ENCODE measurements at regions of chr5 and their contacts with region 1.

Region 1: DNA sequence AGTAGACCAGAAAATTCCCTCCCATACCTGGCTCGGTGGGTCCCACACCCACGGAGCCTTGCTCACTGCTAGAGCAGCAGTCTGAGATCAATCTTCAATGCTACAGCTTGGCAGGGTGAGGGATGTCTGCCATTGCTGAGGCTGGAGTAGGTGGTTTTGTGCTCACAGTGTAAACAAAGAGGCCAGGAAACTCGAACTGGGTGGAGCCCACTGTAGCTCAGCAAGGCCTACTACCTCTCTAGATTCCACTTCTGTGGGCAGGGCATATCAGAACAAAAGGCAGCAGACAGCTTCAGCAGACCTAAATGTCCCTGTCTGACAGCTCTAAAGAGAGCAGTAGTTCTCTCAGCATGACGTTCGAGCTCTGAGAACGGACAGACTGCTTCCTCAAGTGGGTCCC is 5.6 kb upstream of the GZMA start:
- DNase-seq: peak; percentile 22 to 87 (median 56)
- ATAC-seq: peak; percentile 84
- H3K4me3 ChIP-seq: no peak overlapping the region
- H3K4me3 Mint-ChIP-seq: peak overlapping the region; percentile 72
- H3K27ac ChIP-seq: peak overlapping the region; percentile 50 to 64
- H3K27ac Mint-ChIP-seq: peak overlapping the region; percentile 90
- H3K4me1 ChIP-seq: peaks cover 48% of the 10 kb centered on the region
- H3K4me1 Mint-ChIP-seq: peaks cover 86% of the 10 kb centered on the region
- H3K27me3 ChIP-seq: no peaks in the 10 kb centered on the region
- H3K27me3 Mint-ChIP-seq: no peaks in the 10 kb centered on the region
- CTCF ChIP-seq: no peak

Region 2: DNA sequence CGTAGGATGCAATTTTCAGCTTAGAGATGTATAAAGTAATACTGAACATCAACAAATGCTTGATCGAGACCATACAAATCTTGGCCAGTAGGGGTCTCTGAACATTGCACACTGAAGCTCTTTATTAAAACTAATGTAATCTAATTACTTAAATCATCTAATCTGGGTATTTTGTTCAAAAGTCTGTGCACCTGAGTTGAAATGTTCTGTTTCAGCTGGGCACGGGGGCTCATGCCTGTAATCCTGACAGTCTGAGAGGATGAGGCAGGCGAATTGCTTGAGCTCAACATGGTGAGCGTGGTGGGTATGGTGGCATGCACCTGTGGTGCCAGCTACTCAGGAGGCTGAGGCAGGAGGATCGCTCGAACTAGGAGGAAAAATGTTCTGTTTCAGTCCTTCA is 152.5 kb before region 1 on chr5:
- CTCF ChIA-PET with region 1: interaction called, 4 read pairs
- POLR2A ChIA-PET with region 1: interaction called, 17 read pairs
- intact Hi-C with region 1: no loop called
- DNase-seq: peak in 11 of 14 experiments; percentile 11 to 77 (median 29)
- ATAC-seq: peak; percentile 58
- H3K4me3 ChIP-seq: no peak overlapping the region
- H3K4me3 Mint-ChIP-seq: no peak overlapping the region
- H3K27ac ChIP-seq: no peak overlapping the region
- H3K27ac Mint-ChIP-seq: no peak overlapping the region
- H3K4me1 ChIP-seq: peaks cover 3% of the 10 kb centered on the region
- H3K4me1 Mint-ChIP-seq: no peaks in the 10 kb centered on the region
- H3K27me3 ChIP-seq: no peaks in the 10 kb centered on the region
- H3K27me3 Mint-ChIP-seq: no peaks in the 10 kb centered on the region
- CTCF ChIP-seq: peak; percentile 89

Region 3: DNA sequence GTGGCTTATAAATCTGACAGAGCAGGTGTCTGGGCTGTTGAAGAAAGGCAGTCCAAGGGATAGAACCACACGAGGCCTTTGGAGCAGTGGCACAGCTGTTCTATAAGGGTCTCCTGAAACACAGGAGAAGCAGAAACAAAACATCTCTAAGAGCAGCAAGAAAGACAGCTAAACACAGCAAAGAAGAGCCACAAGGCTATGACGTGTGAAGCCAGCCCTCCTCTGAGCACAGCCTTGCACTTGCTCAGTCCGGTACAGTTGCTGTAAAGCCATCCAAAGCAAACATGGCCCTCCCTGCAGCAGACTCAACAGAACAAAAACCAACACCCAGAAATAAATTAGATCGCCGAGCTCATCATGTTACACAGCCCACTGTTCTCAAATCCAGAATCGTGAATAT is 75.5 kb before region 1 on chr5:
- CTCF ChIA-PET with region 1: no interaction called
- POLR2A ChIA-PET with region 1: interaction called, 13 read pairs
- intact Hi-C with region 1: no loop called
- DNase-seq: no peak
- ATAC-seq: no peak
- H3K4me3 ChIP-seq: no peak overlapping the region
- H3K4me3 Mint-ChIP-seq: no peak overlapping the region
- H3K27ac ChIP-seq: peak overlapping the region in 1 of 2 donors; percentile 10
- H3K27ac Mint-ChIP-seq: no peak overlapping the region
- H3K4me1 ChIP-seq: peaks cover 21% of the 10 kb centered on the region
- H3K4me1 Mint-ChIP-seq: peaks cover 58% of the 10 kb centered on the region
- H3K27me3 ChIP-seq: no peaks in the 10 kb centered on the region
- H3K27me3 Mint-ChIP-seq: no peaks in the 10 kb centered on the region
- CTCF ChIP-seq: no peak

Region 4: DNA sequence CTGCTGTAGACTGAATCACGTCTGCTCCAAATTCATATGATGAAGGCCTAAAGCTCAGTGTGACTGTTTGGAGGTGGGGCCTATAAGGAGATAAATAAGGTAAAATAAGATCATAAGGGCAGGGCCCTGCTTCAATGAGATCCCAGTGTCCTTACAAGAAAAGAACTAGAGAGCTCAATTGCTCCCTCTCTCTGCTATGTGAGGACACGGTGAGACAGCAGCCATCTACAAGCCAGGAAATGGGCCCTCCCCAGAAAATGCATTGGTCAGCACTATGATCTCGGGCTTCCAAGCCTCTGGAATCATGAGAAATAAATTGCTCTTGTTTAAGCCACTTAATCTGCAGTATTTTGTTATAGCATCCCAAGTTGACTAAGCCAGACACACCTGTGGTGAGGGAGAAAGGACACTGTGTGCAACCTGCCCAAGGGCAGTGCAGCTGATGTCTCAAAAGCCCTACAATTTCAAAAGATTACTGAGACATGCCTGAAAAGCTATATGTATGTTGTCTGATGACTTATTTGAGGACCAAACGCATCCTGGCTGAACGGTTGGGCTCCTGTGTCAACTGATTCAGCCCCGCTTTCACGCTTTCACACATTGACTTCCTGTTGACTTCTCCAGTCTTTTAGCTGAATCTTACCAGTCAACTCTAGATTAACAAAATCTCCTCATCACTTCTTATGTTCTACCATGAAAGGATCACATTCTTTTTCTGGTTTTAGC is 59.7 kb before region 1 on chr5:
- CTCF ChIA-PET with region 1: no interaction called
- POLR2A ChIA-PET with region 1: interaction called, 25 read pairs
- intact Hi-C with region 1: loop called in 1 of 2 experiments (anchors 2 kb)
- DNase-seq: peak in 13 of 14 experiments; percentile 17 to 85 (median 51)
- ATAC-seq: peak; percentile 91
- H3K4me3 ChIP-seq: no peak overlapping the region
- H3K4me3 Mint-ChIP-seq: peak overlapping the region; percentile 40
- H3K27ac ChIP-seq: peak overlapping the region; percentile 55 to 64
- H3K27ac Mint-ChIP-seq: peak overlapping the region; percentile 80
- H3K4me1 ChIP-seq: peaks cover 15% of the 10 kb centered on the region
- H3K4me1 Mint-ChIP-seq: peaks cover 39% of the 10 kb centered on the region
- H3K27me3 ChIP-seq: no peaks in the 10 kb centered on the region
- H3K27me3 Mint-ChIP-seq: no peaks in the 10 kb centered on the region
- CTCF ChIP-seq: peak; percentile 14

Region 5: DNA sequence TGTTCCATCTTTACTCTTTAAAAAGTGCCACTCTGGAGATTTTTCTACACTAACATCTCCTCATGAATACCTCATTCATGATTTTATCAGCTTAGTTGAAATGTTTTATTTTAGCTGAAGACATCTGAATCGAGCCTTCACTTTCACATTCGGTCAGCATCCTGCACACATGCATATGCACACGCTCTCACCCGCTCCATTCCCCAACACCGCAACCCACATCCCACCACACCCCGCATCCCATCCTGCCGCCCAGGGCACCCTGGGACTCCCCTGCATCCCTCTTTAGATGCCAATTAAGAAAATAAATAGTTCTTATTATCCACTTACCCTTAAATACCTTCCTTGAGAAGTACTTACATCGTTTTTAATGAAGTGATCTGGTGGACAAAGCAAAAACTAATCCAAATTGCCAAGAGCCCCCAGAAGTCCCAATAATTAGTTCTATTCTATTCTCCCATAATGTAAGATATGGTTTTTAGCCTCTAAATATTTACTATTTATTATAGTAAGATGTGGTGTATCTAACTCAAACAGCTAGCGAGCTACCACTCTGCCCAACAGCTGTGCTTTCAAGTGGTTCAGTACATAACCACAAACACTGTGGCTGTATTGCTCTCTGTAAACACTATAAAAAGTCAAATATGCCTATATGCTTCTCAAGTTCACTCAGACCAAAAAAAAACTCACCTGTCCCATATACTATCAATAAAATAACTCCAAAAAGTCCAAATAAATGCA is 34.7 kb before region 1 on chr5:
- CTCF ChIA-PET with region 1: no interaction called
- POLR2A ChIA-PET with region 1: interaction called, 27 read pairs
- intact Hi-C with region 1: loop called in 1 of 2 experiments (anchors 5 kb)
- DNase-seq: peak; percentile 3 to 89 (median 32)
- ATAC-seq: peak; percentile 77
- H3K4me3 ChIP-seq: peak overlapping the region; percentile 42
- H3K4me3 Mint-ChIP-seq: peak overlapping the region; percentile 77
- H3K27ac ChIP-seq: no peak overlapping the region
- H3K27ac Mint-ChIP-seq: peak overlapping the region; percentile 14
- H3K4me1 ChIP-seq: peaks cover 22% of the 10 kb centered on the region
- H3K4me1 Mint-ChIP-seq: peaks cover 68% of the 10 kb centered on the region
- H3K27me3 ChIP-seq: no peaks in the 10 kb centered on the region
- H3K27me3 Mint-ChIP-seq: no peaks in the 10 kb centered on the region
- CTCF ChIP-seq: no peak

Region 6: GRCh38 chr5:55072666-55073065 is 24.2 kb before region 1 on chr5:
- CTCF ChIA-PET with region 1: no interaction called
- POLR2A ChIA-PET with region 1: interaction called, 33 read pairs
- intact Hi-C with region 1: loop called in 1 of 2 experiments (anchors 1 kb)
- DNase-seq: peak in 3 of 14 experiments; percentile 45 to 87 (median 53)
- ATAC-seq: peak; percentile 94
- H3K4me3 ChIP-seq: no peak overlapping the region
- H3K4me3 Mint-ChIP-seq: peak overlapping the region; percentile 4
- H3K27ac ChIP-seq: peak overlapping the region in 1 of 2 donors; percentile 41
- H3K27ac Mint-ChIP-seq: peak overlapping the region; percentile 78
- H3K4me1 ChIP-seq: peaks cover 19% of the 10 kb centered on the region
- H3K4me1 Mint-ChIP-seq: peaks cover 34% of the 10 kb centered on the region
- H3K27me3 ChIP-seq: no peaks in the 10 kb centered on the region
- H3K27me3 Mint-ChIP-seq: no peaks in the 10 kb centered on the region
- CTCF ChIP-seq: no peak

Measured in CD4-positive, alpha-beta T cell (primary cell).